IMR-90 (cell line): ENCODE measurements at regions of chr11 and their contacts with region 1.

Region 1: DNA sequence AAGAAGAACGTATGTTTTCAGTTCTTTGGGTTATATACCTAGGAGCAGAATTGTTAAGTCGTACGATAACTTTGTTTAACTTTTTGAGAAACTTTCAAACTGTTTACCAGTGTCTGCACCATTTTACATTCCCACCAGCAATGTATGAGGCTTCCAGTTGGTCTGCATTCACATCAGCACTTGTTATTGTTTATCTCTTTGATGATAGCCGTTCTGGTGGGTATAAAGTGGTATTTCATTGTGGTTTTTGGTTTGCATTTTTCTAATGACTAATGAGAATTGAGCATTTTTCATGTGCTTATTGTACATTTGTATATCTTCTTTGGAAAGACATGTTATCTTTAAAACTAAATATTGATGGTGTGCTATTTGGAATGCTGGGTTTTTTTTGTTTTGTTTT is 59.8 kb downstream of the KDM2A start:
- DNase-seq: peak; percentile 77
- ATAC-seq: peak; percentile 90
- H3K4me3 ChIP-seq: no peak overlapping the region
- H3K27ac ChIP-seq: no peak overlapping the region
- H3K4me1 ChIP-seq: peaks cover 9% of the 10 kb centered on the region
- H3K27me3 ChIP-seq: no peaks in the 10 kb centered on the region
- CTCF ChIP-seq: no peak
- POLR2A ChIP-seq: no peak
- RAD21 ChIP-seq: no peak

Region 2: DNA sequence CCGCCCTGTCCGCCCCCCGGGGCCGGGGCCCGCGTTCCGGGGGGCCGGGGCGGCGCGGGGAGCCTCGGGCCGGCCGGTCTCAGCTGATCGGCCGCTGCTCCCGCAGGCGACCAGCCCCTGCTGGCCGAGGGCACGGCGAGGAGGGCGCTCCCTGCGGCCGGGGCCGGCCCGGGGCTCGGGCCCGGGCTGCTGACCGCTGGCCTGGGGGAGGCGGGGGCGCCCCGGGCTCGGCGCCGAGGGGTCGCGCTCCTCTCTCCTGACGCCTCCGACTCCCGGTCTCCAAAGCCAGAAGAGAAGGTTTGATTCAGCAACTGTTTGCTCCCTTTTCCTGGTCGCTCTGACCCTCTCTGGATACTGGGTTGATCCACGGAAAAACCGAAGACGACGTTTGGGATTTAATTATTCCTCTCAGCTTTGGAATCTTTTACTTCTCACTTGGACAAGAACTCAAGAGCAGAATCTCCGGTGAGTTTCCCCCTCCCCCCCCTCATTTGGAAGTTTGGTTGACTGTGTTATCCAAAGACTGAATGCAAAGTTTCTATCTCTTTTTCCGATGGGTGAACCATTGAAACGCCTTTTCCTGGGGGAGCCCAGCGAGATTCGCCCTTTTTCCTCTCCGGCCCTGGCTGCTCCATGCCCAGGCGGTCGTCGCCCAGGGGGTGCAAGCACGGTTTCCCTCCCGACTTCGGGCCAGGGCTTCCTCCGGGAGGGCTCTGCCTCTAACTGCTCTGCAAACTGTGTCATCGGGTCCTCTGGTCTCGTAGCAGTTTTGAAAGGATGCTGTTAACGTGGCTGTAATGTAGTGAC is 59.1 kb before region 1 on chr11:
- CTCF ChIA-PET with region 1: no interaction called
- POLR2A ChIA-PET with region 1: no interaction called
- dilution Hi-C with region 1: no loop called
- in situ Hi-C with region 1: no loop called
- intact Hi-C with region 1: loop called (anchors 2 kb)
- DNase-seq: no peak
- ATAC-seq: peak; percentile 21
- H3K4me3 ChIP-seq: peak overlapping the region; percentile 99
- H3K27ac ChIP-seq: peak overlapping the region; percentile 92
- H3K4me1 ChIP-seq: peaks cover 8% of the 10 kb centered on the region
- H3K27me3 ChIP-seq: no peaks in the 10 kb centered on the region
- CTCF ChIP-seq: peak; percentile 29; the same call in 1 of the 2 replicates
- POLR2A ChIP-seq: no peak
- RAD21 ChIP-seq: no peak